Right ventricle myocardium inferior (tissue), 1 donor: ENCODE measurements at regions of chr1 and their contacts with region 1.

Region 1: GRCh38 chr1:110312188-110313121 is 26.7 kb upstream of the RBM15 start:
- DNase-seq: peak; percentile 88
- ATAC-seq: peak; percentile 97

Region 2: GRCh38 chr1:110203021-110203661 is 109.3 kb before region 1 on chr1:
- intact Hi-C with region 1: loop called (anchors 1 kb)
- DNase-seq: no peak
- ATAC-seq: no peak

Region 3: GRCh38 chr1:110272045-110272444 is 40.4 kb before region 1 on chr1:
- intact Hi-C with region 1: no loop called
- DNase-seq: no peak
- ATAC-seq: no peak

Region 4: GRCh38 chr1:110403805-110404204 is 91.3 kb after region 1 on chr1:
- intact Hi-C with region 1: no loop called
- DNase-seq: no peak
- ATAC-seq: no peak

Region 5: DNA sequence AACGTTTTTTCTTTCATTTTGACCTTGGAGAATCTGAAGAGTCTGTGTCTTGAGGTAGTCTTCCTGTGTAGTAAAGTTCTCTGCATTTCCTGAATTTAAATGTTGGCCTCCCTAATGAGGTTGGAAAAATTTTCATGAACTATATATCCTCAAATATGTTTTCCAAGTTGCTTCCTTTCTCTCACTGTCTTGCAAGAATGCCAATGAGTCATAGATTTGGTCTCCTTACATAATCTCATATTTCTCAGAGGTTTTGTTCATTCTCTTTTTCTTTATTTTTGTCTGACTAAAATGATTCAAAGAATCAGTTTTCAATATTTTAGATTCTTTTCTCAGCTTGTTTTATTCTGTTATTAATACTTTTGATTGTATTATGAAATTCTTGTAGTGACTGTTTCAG is 739.8 kb after region 1 on chr1:
- intact Hi-C with region 1: no loop called
- DNase-seq: no peak
- ATAC-seq: no peak